CD4-positive, alpha-beta T cell (primary cell): ENCODE measurements at regions of chr6 and their contacts with region 1.

Region 1: DNA sequence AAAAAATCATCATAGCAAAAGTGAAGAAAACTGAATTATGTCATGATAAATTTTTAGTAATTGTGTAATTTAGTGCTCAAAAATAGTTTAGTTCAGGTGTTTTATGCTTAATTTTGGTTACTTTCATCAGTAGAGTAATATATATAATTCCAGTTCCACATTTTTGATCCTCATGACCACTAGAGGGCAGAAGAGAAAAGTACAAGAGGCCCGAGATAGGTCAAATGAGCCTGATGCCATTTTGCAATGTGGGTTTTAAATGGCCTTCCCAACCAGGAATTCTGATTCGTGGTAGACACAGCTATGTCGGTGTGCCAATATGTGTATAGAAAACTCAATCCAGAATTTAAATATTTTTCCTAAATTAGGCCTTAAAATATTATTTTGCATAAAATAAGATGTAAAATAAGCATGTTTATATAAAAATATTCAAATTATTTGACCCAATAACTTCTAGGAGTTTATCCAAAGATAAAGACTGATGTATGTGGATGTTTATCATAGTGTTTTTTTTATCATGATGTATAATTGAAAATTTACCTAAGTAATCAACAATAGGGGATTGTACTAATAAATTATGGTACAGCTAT is 159.7 kb upstream of the RPS6KA2 start:
- DNase-seq: peak in 5 of 14 experiments; percentile 10 to 79 (median 77)
- ATAC-seq: peak; percentile 66
- H3K4me3 ChIP-seq: no peak overlapping the region
- H3K4me3 Mint-ChIP-seq: no peak overlapping the region
- H3K27ac ChIP-seq: no peak overlapping the region
- H3K27ac Mint-ChIP-seq: no peak overlapping the region
- H3K4me1 ChIP-seq: no peaks in the 10 kb centered on the region
- H3K4me1 Mint-ChIP-seq: no peaks in the 10 kb centered on the region
- H3K27me3 ChIP-seq: no peaks in the 10 kb centered on the region
- H3K27me3 Mint-ChIP-seq: no peaks in the 10 kb centered on the region
- CTCF ChIP-seq: peak; percentile 95

Region 2: DNA sequence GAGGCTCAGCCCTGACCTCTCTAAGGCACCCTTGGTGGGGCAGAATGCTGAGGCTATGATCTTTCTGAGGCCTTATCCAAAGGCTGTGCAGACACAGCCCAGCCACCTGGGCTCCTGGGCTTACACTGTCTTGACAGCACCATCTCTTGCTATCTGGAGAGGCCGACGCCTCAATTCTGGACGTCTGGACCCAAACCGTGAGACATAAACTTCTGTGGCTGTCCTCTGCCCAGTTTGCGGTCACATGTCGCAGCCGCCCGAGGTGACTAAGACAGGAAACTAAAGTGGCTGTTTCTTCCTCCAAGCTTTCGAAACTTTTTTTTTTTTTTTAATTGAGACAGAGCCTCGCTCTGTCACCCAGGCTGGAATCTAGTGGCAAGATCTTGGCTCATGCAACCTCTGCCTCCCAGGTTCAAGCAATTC is 527.9 kb before region 1 on chr6:
- CTCF ChIA-PET with region 1: no interaction called
- POLR2A ChIA-PET with region 1: no interaction called
- intact Hi-C with region 1: no loop called
- DNase-seq: peak in 10 of 14 experiments; percentile 27 to 84 (median 58)
- ATAC-seq: no peak
- H3K4me3 ChIP-seq: no peak overlapping the region
- H3K4me3 Mint-ChIP-seq: no peak overlapping the region
- H3K27ac ChIP-seq: no peak overlapping the region
- H3K27ac Mint-ChIP-seq: no peak overlapping the region
- H3K4me1 ChIP-seq: peaks cover 33% of the 10 kb centered on the region
- H3K4me1 Mint-ChIP-seq: peaks cover 9% of the 10 kb centered on the region
- H3K27me3 ChIP-seq: peaks cover 6 to 10% of the 10 kb centered on the region in 2 experiments
- H3K27me3 Mint-ChIP-seq: peaks cover 49% of the 10 kb centered on the region
- CTCF ChIP-seq: no peak

Region 3: DNA sequence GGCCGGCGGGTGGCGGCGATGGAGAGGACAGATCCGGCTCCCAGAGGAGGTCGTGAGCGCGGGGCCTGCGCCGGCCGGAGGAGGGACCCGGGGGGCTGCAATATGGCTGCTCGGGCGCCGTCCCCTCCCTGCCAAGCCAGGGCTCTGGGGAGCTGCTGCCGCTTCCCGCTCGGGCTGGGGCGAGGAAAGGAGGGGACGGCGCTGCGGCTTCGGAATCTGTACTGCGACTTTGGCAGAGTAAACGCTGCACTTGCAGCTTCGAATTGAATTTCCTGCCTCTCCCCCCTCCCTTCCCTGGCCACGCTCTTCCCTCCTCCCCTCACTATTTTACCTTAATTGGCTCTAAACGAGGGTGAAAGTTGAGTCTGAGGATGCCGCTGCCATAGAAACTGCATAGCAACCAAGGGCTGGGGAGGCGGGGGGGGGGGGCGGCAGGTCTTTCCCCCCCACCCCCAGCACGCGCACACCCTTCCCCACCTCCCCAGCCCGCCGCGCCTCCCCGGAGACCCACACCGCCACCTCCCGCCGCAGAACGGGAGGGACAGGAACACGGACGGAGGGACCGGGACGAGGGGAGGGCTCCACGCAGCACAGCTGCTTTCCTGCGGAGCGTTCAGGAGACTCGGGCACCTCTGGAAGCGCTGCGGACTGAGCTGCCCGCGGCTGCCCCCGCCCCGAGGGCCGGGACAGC is 75.6 kb after region 1 on chr6:
- CTCF ChIA-PET with region 1: interaction called, 3 read pairs
- POLR2A ChIA-PET with region 1: no interaction called
- intact Hi-C with region 1: loop called in 1 of 2 experiments (anchors 5 kb)
- DNase-seq: peak; percentile 13 to 80 (median 34)
- ATAC-seq: peak; percentile 87
- H3K4me3 ChIP-seq: peak overlapping the region; percentile 63
- H3K4me3 Mint-ChIP-seq: peak overlapping the region; percentile 94
- H3K27ac ChIP-seq: no peak overlapping the region
- H3K27ac Mint-ChIP-seq: peak overlapping the region; percentile 58
- H3K4me1 ChIP-seq: peaks cover 17% of the 10 kb centered on the region
- H3K4me1 Mint-ChIP-seq: peaks cover 17% of the 10 kb centered on the region
- H3K27me3 ChIP-seq: peaks cover 0 to 3% of the 10 kb centered on the region in 2 experiments
- H3K27me3 Mint-ChIP-seq: no peaks in the 10 kb centered on the region
- CTCF ChIP-seq: peak; percentile 28

Region 4: DNA sequence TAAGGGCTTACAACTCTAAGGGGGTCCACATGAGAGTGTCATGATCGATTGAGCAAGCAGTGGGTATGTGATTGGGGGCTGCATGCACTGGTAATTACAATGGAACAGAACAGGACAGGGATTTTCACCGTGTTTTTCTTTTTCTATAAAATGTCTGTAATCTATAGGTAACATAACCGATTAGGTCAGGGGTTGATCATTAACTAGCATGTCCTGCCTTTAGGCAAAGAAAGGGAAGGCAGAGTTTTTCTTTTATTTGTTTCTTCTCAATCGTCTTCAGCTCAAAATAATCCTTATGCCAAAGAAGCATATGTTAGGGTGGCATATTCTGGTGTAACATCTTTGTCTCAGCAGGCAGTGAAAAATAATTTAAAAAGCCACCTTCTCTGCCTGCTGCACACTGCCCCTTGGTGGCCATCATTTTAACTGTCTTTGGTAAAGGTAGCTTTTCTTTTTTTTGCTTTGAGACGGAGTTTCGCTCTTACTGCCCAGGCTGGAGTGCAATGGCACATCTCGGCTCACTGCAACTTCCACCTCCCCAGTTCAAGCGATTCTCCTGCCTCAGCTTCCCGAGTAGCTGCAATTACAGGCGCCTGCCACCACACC is 202.7 kb after region 1 on chr6:
- CTCF ChIA-PET with region 1: interaction called, 14 read pairs
- POLR2A ChIA-PET with region 1: no interaction called
- intact Hi-C with region 1: loop called (anchors 1 kb)
- DNase-seq: peak in 12 of 14 experiments; percentile 23 to 79 (median 48)
- ATAC-seq: peak; percentile 89
- H3K4me3 ChIP-seq: no peak overlapping the region
- H3K4me3 Mint-ChIP-seq: no peak overlapping the region
- H3K27ac ChIP-seq: no peak overlapping the region
- H3K27ac Mint-ChIP-seq: peak overlapping the region; percentile 39
- H3K4me1 ChIP-seq: peaks cover 5% of the 10 kb centered on the region
- H3K4me1 Mint-ChIP-seq: peaks cover 21% of the 10 kb centered on the region
- H3K27me3 ChIP-seq: no peaks in the 10 kb centered on the region
- H3K27me3 Mint-ChIP-seq: no peaks in the 10 kb centered on the region
- CTCF ChIP-seq: peak; percentile 44

Region 5: GRCh38 chr6:167141667-167142432 is 355.1 kb after region 1 on chr6:
- CTCF ChIA-PET with region 1: interaction called, 5 read pairs
- POLR2A ChIA-PET with region 1: no interaction called
- intact Hi-C with region 1: loop called (anchors 1 to 2 kb)
- DNase-seq: peak; percentile 14 to 79 (median 54)
- ATAC-seq: peak; percentile 84
- H3K4me3 ChIP-seq: no peak overlapping the region
- H3K4me3 Mint-ChIP-seq: no peak overlapping the region
- H3K27ac ChIP-seq: no peak overlapping the region
- H3K27ac Mint-ChIP-seq: peak overlapping the region; percentile 12
- H3K4me1 ChIP-seq: peaks cover 19% of the 10 kb centered on the region
- H3K4me1 Mint-ChIP-seq: peaks cover 41% of the 10 kb centered on the region
- H3K27me3 ChIP-seq: no peaks in the 10 kb centered on the region
- H3K27me3 Mint-ChIP-seq: peaks cover 6% of the 10 kb centered on the region
- CTCF ChIP-seq: peak; percentile 90